ENCODE measurements at regions of chr14 and their contacts with region 1.

Region 1: GRCh38 chr14:70567791-70568190 is 32.7 kb downstream of the MED6 start:
- DNase-seq: peak; percentile 43
- H3K4me3 ChIP-seq: no peak overlapping the region
- H3K27ac ChIP-seq: no peak overlapping the region
- H3K4me1 ChIP-seq: no peaks in the 10 kb centered on the region
- H3K27me3 ChIP-seq: no peaks in the 10 kb centered on the region
- CTCF ChIP-seq: peak; percentile 69 to 77

Region 2: DNA sequence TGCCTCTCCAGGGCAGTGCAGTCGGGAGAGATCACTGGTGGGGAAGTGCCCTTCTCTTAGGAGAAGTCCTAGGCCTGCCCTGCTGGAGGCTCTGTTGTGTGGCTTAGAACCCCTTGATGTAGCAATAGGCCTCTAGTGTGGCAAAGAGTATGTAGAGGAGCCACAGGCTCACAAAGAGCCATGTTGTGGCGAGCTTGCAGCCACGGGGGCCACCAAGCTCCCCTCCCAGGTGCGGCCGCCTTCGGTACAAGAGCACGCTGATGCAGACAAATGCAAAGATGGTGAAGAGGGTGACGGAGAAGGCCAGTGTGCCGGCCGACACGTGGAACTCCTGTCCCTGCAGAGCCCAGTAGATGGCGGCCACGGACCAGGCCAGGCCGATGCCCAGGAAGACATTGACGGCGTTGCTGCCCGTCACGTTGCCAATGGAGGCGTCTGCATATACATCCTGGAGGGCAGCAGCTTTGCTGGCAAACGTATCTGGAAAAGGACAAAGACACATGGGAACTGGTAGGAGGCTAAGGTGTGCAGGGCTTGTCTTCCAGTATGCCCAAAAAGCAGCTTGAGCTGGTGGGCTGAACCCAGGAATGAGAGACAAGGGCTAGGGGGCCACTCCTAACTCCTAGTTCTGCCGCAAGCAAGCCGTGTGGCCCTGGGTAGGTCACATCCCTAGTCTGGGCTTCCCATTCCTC is 521.8 kb before region 1 on chr14:
- CTCF ChIA-PET with region 1: no interaction called
- dilution Hi-C with region 1: no loop called
- in situ Hi-C with region 1: no loop called
- intact Hi-C with region 1: loop called (anchors 5 kb)
- DNase-seq: peak; percentile 50
- H3K4me3 ChIP-seq: no peak overlapping the region
- H3K27ac ChIP-seq: peak overlapping the region; percentile 9
- H3K4me1 ChIP-seq: peaks cover 12% of the 10 kb centered on the region
- H3K27me3 ChIP-seq: no peaks in the 10 kb centered on the region
- CTCF ChIP-seq: peak; percentile 85 to 96

Region 3: DNA sequence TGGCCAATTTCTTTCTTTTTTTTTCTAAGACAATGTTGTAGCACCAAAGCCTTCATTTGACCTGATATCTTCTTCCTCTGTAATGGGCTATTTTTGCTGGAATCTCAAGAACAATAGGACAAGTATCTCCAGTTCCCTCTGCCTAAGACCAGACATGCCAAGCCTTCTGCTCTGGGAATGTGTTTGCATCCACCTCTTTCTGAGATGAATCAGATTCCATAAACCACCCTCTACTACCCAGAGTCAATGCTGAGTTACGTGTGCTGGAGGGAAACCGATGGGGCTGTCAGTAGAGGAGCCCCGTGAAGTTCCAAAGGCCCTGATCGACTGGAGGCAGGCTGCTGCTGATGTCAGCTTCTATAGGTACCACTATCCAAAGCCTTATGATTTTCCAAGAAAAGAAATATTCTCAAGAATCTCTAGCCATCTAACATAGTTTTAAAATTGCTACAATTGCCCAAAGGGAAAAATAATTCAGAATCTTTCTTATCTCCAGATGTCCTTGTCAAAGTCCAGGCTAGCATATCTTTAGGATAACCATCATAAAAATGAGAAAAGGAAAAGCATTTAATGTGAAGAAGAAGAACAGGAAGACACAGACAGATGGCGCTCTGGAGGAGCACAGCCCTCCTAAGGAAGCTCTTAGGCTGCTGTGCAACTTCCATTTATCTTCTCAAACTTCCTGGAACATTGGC is 481.0 kb before region 1 on chr14:
- CTCF ChIA-PET with region 1: interaction called, 6 read pairs
- dilution Hi-C with region 1: no loop called
- in situ Hi-C with region 1: no loop called
- intact Hi-C with region 1: loop called (anchors 5 kb)
- DNase-seq: peak; percentile 13
- H3K4me3 ChIP-seq: no peak overlapping the region
- H3K27ac ChIP-seq: no peak overlapping the region
- H3K4me1 ChIP-seq: no peaks in the 10 kb centered on the region
- H3K27me3 ChIP-seq: peaks cover 3% of the 10 kb centered on the region
- CTCF ChIP-seq: peak; percentile 57 to 78

Region 4: DNA sequence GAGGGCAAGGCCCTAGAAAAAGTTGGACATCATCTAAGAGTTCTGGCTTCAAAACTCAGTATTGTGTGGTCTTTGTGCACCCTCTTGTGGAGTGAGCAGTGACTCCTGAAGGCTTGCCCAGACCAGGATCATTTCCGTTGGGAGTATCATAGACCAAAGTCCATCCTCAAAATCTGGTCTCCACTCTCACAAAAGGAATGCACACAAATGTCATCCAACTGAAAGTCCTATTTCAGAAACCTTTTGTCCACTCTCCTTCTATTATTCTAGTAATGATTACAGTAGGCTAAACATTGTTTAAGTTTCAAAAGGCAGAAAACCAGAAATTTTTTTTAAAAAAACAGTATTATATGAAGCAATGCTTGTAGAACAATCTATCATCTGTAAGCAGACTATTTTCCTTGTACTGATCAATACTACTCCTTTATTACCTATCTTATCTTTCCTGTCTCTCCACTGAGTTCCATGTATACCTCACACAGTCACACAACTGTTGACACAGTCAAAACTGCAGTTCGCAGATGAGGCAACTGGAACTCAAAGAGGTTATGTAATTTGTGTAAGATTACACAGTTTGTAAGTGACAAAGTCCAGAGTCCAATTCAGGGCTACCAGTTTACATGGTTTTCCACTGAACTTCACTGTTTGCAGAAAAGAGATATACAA is 249.7 kb before region 1 on chr14:
- CTCF ChIA-PET with region 1: no interaction called
- dilution Hi-C with region 1: no loop called
- in situ Hi-C with region 1: no loop called
- intact Hi-C with region 1: loop called (anchors 10 kb)
- DNase-seq: peak; percentile 48
- H3K4me3 ChIP-seq: no peak overlapping the region
- H3K27ac ChIP-seq: no peak overlapping the region
- H3K4me1 ChIP-seq: peaks cover 9% of the 10 kb centered on the region
- H3K27me3 ChIP-seq: no peaks in the 10 kb centered on the region
- CTCF ChIP-seq: peak; percentile 42 to 65

Region 5: GRCh38 chr14:70359181-70360090 is 208.4 kb before region 1 on chr14 and contains the start of gene COX16:
- CTCF ChIA-PET with region 1: no interaction called
- dilution Hi-C with region 1: no loop called
- in situ Hi-C with region 1: no loop called
- intact Hi-C with region 1: loop called (anchors 1 kb)
- DNase-seq: peak; percentile 97
- H3K4me3 ChIP-seq: peak within 1 kb of the TSS; percentile 71 to 97 (median 89)
- H3K27ac ChIP-seq: peak within 1 kb of the TSS; percentile 67
- H3K4me1 ChIP-seq: peaks cover 10% of the 10 kb centered on the region
- H3K27me3 ChIP-seq: no peaks in the 10 kb centered on the region
- CTCF ChIP-seq: no peak
- total RNA-seq, gene COX16: 26.2 to 31.6 TPM

Region 6: DNA sequence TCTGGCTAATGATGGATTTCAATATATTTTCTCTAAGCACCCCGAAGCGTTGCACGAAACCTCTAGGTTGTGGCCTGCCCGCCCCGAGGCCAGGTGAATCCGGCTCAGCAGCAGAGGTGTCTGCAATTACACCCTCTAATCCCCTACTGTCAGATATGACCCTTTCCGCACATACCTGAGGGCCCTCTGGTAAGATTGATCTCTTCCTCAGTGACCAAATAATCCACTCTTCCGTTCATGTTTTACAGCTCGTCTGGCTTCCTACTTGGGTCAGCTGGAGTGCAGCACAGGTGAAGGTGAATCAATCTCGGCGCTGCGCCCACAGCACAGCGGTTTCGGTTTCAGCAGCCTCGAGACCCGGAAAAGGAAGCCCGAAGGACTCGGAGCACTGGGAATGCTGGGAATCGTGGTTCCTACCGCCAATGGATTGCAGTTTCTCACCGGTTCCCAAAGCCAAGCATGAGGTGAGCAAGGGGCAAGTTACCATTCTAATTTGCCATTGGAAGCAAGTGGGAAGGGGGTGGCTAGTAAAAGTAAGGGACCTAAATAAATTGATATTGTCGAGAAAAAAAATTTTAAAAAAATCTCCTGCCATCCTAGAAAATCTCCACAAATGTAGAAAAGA is 151.0 kb before region 1 on chr14 and contains the start of gene SYNJ2BP:
- CTCF ChIA-PET with region 1: no interaction called
- dilution Hi-C with region 1: no loop called
- in situ Hi-C with region 1: no loop called
- intact Hi-C with region 1: loop called (anchors 10 kb)
- DNase-seq: peak; percentile 88
- H3K4me3 ChIP-seq: peak within 1 kb of the TSS; percentile 70 to 85 (median 82)
- H3K27ac ChIP-seq: peak within 1 kb of the TSS; percentile 74
- H3K4me1 ChIP-seq: no peaks in the 10 kb centered on the region
- H3K27me3 ChIP-seq: peaks cover 2% of the 10 kb centered on the region
- CTCF ChIP-seq: no peak
- total RNA-seq, gene SYNJ2BP: 16.2 to 18.4 TPM

Region 7: DNA sequence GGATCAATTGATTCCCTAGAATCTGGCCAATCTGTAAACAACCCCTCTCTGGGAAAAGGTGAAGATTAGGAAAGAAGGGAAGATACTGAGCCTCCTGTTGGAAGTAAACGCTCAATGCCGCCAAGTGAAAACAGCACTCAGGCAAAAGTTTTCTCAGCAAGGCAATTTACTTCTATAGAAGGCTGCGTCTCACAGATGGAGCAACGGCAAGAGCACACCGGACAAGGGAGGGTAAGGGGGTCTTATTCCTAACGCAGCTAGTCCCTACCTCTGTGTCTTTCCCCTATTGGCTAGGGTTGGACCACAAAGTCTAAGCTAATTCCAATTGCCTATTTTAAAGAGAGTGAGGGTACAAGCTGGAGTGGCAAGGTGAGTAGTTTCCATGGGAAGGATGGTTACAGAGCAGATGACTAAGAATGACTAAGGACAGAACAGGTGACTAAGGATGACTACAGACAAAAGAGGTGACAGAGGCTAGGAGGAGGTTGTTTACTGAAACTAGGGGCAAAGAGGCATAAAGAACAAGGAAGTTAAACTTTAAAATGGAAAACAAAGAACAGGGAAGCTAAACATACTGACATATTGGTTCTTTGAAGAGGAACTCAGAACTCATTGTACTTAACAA is 68.3 kb after region 1 on chr14:
- CTCF ChIA-PET with region 1: no interaction called
- dilution Hi-C with region 1: no loop called
- in situ Hi-C with region 1: no loop called
- intact Hi-C with region 1: no loop called
- DNase-seq: peak; percentile 79
- H3K4me3 ChIP-seq: no peak overlapping the region
- H3K27ac ChIP-seq: peak overlapping the region; percentile 15
- H3K4me1 ChIP-seq: peaks cover 9% of the 10 kb centered on the region
- H3K27me3 ChIP-seq: no peaks in the 10 kb centered on the region
- CTCF ChIP-seq: no peak

Region 8: DNA sequence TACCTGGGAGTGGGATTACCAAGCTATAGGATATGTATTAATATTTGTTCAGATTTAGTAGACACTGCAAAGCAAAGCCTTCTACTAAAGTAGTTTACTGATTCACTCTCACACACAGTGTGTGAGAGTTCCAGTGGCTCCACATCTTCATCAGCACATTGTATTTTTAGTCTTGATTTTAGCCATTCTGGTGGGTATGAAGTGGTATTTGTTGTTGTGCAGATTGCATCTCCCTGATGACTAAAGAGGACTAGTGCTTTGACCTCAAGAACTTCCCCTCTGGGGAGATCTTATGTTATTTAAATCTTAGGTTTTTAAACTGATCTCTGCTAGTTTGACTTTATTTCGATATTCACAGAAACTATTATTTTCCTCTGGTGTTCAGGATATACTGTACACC is 884.7 kb after region 1 on chr14:
- CTCF ChIA-PET with region 1: no interaction called
- dilution Hi-C with region 1: no loop called
- in situ Hi-C with region 1: no loop called
- intact Hi-C with region 1: no loop called
- DNase-seq: no peak
- H3K4me3 ChIP-seq: no peak overlapping the region
- H3K27ac ChIP-seq: no peak overlapping the region
- H3K4me1 ChIP-seq: peaks cover 14% of the 10 kb centered on the region
- H3K27me3 ChIP-seq: no peaks in the 10 kb centered on the region
- CTCF ChIP-seq: no peak